Esophagus squamous epithelium (tissue), 5 donors: ENCODE measurements at regions of chr13 and their contacts with region 1.

Region 1: GRCh38 chr13:95181586-95181985 is 119.7 kb downstream of the ABCC4 start:
- DNase-seq: no peak
- H3K4me3 ChIP-seq: no peak overlapping the region
- H3K27ac ChIP-seq: no peak overlapping the region
- H3K4me1 ChIP-seq: peaks cover 0 to 3% (median 0%) of the 10 kb centered on the region in 3 donors
- H3K27me3 ChIP-seq: no peaks in the 10 kb centered on the region
- CTCF ChIP-seq: no peak
- POLR2A ChIP-seq: no peak

Region 2: DNA sequence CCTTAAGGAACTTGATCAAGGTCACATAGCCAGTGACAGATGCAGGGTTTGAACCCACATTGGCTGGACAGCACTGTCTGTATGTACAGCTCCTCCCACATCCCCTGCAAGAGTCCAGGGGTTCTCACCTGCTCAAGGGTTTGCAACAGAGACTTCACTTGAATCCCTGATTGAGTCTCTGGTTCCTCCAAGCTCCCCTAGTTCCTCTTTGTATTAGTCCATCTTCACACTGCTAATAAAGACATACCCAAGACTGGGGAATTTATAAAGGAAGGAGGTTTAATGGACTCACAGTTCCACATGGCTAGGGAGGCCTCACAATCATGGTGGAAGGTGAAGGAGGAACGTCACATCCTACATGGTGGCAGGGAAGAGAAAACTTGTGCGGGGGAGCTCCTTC is 298.1 kb after region 1 on chr13:
- intact Hi-C with region 1: loop called (anchors 10 kb)
- DNase-seq: no peak
- H3K4me3 ChIP-seq: no peak overlapping the region
- H3K27ac ChIP-seq: no peak overlapping the region
- H3K4me1 ChIP-seq: peaks cover 0 to 5% (median 4%) of the 10 kb centered on the region in 3 donors
- H3K27me3 ChIP-seq: peaks cover 0 to 21% (median 0%) of the 10 kb centered on the region in 4 donors
- CTCF ChIP-seq: no peak
- POLR2A ChIP-seq: no peak